Right ventricle myocardium superior (tissue), 1 donor: ENCODE measurements at regions of chr17 and their contacts with region 1.

Region 1: GRCh38 chr17:68468334-68468733 is 11.0 kb upstream of the WIPI1 start:
- DNase-seq: no peak
- ATAC-seq: peak; percentile 81

Region 2: GRCh38 chr17:68314916-68315535 is 153.3 kb before region 1 on chr17:
- intact Hi-C with region 1: no loop called
- DNase-seq: no peak
- ATAC-seq: peak; percentile 19

Region 3: DNA sequence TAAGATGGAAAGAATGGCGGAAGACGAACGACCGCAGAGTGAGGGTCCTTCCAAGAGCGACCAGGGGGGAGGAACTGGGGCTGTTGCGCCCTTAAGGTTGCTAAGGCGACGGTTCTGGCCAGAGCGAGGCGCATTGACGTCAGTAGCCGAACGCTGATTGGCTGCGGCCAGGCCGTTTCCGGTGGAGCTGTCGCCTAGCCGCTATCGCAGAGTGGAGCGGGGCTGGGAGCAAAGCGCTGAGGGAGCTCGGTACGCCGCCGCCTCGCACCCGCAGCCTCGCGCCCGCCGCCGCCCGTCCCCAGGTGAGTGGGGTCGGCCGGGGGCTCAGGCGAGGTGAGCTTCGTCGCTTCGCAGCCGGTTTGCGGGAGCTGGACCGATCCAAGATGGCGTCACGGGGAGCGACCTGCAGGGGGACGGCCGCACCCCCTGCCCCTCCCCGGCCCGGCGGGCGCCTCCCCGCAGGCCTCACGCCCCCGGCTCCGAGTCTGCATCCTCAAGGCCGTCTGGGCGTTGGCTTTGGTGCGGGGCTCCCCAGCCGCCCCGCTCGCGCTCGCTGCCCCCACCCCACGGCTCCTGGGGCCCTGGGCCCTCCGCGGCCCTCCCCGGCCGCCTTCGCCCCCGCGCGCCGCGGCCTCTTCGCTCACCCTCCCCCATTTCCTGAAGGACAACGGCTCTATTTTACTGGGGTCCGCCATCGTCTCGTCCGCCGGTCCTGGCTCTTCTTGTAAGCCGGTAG is 44.1 kb after region 1 on chr17 and contains the start of gene PRKAR1A:
- intact Hi-C with region 1: loop called (anchors 5 kb)
- DNase-seq: peak; percentile 97
- ATAC-seq: peak; percentile 94
- total RNA-seq, gene PRKAR1A: 607 TPM

Region 4: GRCh38 chr17:68640242-68640989 is 172.1 kb after region 1 on chr17:
- intact Hi-C with region 1: no loop called
- DNase-seq: no peak
- ATAC-seq: no peak

Region 5: DNA sequence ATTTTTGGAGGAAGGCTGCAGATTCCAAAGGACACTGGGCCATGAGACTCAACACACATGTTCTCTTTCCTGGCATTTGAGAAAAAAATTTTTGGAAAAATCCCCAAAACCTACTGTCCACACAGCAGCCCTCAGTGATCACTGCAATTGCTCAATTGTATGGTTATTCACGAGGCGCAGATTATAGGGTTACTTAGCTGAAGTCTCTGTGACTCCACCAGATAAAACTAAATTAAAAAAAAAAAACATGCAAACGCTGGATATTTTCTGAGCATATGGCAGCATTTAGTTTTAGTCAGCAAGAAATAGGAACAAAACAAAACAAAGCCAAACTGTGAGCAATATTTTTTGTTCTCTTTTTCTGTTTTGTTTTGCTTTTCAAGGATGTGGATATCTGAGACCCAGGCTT is 216.6 kb after region 1 on chr17:
- intact Hi-C with region 1: no loop called
- DNase-seq: no peak
- ATAC-seq: peak; percentile 91